Sigmoid colon (tissue), 7 donors: ENCODE measurements at regions of chr3 and their contacts with region 1.

Region 1: GRCh38 chr3:61927332-61927731 is 366.0 kb downstream of the PTPRG start:
- DNase-seq: peak; percentile 93
- H3K4me3 ChIP-seq: no peak overlapping the region
- H3K27ac ChIP-seq: peak overlapping the region; percentile 55 to 78 (median 70)
- H3K4me1 ChIP-seq: peaks cover 0 to 67% (median 57%) of the 10 kb centered on the region in 4 donors
- H3K27me3 ChIP-seq: no peaks in the 10 kb centered on the region
- CTCF ChIP-seq: no peak
- EP300 ChIP-seq: no peak
- POLR2A ChIP-seq: no peak

Region 2: DNA sequence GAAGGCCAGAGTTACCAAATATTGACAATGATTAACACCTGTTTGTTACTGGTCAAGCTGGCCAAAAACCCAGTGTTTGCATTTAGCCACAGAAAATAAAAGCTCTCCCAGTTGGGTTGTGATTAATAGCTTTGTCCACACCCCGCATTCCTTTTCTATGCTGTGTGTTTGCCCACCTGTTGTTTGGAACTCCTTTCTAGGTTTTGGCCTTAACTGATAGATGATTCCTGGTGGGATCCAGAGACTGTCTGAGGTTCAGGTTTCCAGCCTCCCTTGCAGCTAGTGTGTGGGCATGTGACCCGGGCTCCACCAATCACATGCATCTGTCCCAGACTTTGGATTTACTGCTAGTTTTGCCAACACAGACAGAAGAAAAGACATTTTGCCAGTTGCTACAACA is 282.2 kb before region 1 on chr3:
- intact Hi-C with region 1: loop called (anchors 10 kb)
- DNase-seq: no peak
- H3K4me3 ChIP-seq: no peak overlapping the region
- H3K27ac ChIP-seq: no peak overlapping the region
- H3K4me1 ChIP-seq: peaks cover 0 to 32% (median 26%) of the 10 kb centered on the region in 4 donors
- H3K27me3 ChIP-seq: no peaks in the 10 kb centered on the region
- CTCF ChIP-seq: no peak
- EP300 ChIP-seq: no peak
- POLR2A ChIP-seq: no peak

Region 3: GRCh38 chr3:61864886-61865285 is 62.4 kb before region 1 on chr3:
- intact Hi-C with region 1: loop called (anchors 5 kb)
- DNase-seq: no peak
- H3K4me3 ChIP-seq: no peak overlapping the region
- H3K27ac ChIP-seq: peak overlapping the region in 1 of 4 donors; percentile 12
- H3K4me1 ChIP-seq: peaks cover 0 to 64% (median 59%) of the 10 kb centered on the region in 4 donors
- H3K27me3 ChIP-seq: no peaks in the 10 kb centered on the region
- CTCF ChIP-seq: no peak
- EP300 ChIP-seq: no peak
- POLR2A ChIP-seq: no peak